ENCODE measurements at regions of chr2 and their contacts with region 1.

Region 1: GRCh38 chr2:201231781-201232466 is 28.4 kb upstream of the CASP8 start:
- DNase-seq: peak; percentile 96
- ATAC-seq: peak; percentile 55
- H3K4me3 Mint-ChIP-seq: peak overlapping the region; percentile 98
- H3K27ac Mint-ChIP-seq: peak overlapping the region; percentile 89
- H3K4me1 Mint-ChIP-seq: peaks cover 53% of the 10 kb centered on the region
- H3K27me3 Mint-ChIP-seq: no peaks in the 10 kb centered on the region

Region 2: GRCh38 chr2:200713003-200713703 is 518.8 kb before region 1 on chr2:
- CTCF ChIA-PET with region 1: interaction called, 16 read pairs
- POLR2A ChIA-PET with region 1: interaction called, 8 read pairs
- DNase-seq: peak; percentile 97
- ATAC-seq: peak; percentile 99
- H3K4me3 Mint-ChIP-seq: peak overlapping the region; percentile 71
- H3K27ac Mint-ChIP-seq: peak overlapping the region; percentile 98
- H3K4me1 Mint-ChIP-seq: peaks cover 18% of the 10 kb centered on the region
- H3K27me3 Mint-ChIP-seq: no peaks in the 10 kb centered on the region

Region 3: GRCh38 chr2:200963124-200963917 is 268.6 kb before region 1 on chr2 and contains the start of gene ORC2:
- CTCF ChIA-PET with region 1: interaction called, 21 read pairs
- POLR2A ChIA-PET with region 1: interaction called, 3 read pairs
- DNase-seq: peak; percentile 94
- ATAC-seq: peak; percentile 97
- H3K4me3 Mint-ChIP-seq: peak within 1 kb of the TSS; percentile 93
- H3K27ac Mint-ChIP-seq: peak within 1 kb of the TSS; percentile 97
- H3K4me1 Mint-ChIP-seq: peaks cover 63% of the 10 kb centered on the region
- H3K27me3 Mint-ChIP-seq: no peaks in the 10 kb centered on the region
- total RNA-seq, gene ORC2: 47.4 to 57.2 TPM

Region 4: GRCh38 chr2:201130524-201131186 is 101.3 kb before region 1 on chr2:
- CTCF ChIA-PET with region 1: interaction called, 11 read pairs
- POLR2A ChIA-PET with region 1: interaction called, 6 read pairs
- DNase-seq: peak; percentile 43
- ATAC-seq: peak; percentile 48
- H3K4me3 Mint-ChIP-seq: peak overlapping the region; percentile 62
- H3K27ac Mint-ChIP-seq: peak overlapping the region; percentile 85
- H3K4me1 Mint-ChIP-seq: peaks cover 72% of the 10 kb centered on the region
- H3K27me3 Mint-ChIP-seq: no peaks in the 10 kb centered on the region

Region 5: DNA sequence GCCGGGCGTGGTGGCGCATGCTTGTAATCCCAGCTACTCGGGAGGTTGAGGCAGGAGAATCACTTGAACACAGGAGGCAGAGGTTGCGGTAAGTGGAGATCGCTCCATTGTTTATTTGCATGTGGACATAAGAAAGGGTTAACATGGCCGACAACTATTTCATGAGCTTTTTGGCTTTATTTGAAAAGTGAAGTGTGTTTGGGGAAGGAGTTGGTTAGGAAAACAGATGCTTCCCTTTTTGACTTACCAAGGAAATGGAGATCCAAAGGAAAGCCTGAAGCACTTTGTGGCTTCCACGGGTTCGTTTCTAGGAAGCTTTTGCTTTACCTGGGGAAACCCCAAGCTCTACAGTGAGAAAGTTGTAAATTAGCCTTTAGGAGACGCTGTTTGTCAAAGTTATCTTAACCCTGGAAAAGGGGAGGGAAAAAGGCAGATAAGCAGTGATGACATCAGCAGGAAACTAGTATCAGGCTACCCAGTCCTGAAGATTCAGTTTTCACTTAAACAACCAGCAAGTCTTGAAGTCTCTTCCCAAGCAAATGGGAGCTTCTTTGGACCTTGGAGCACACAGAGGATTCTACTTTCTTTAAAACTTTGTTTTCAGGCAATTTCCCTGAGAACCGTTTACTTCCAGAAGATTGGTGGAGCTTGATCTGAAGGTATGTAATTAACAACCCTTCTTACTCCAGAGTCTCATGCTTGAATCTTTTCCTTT is 49.1 kb before region 1 on chr2 and contains the start of gene CASP10:
- CTCF ChIA-PET with region 1: interaction called, 455 read pairs
- POLR2A ChIA-PET with region 1: interaction called, 97 read pairs
- DNase-seq: peak; percentile 60
- ATAC-seq: peak; percentile 79
- H3K4me3 Mint-ChIP-seq: peak within 1 kb of the TSS; percentile 97
- H3K27ac Mint-ChIP-seq: peak within 1 kb of the TSS; percentile 93
- H3K4me1 Mint-ChIP-seq: peaks cover 46% of the 10 kb centered on the region
- H3K27me3 Mint-ChIP-seq: no peaks in the 10 kb centered on the region
- total RNA-seq, gene CASP10: 40.7 to 42.8 TPM

Region 6: DNA sequence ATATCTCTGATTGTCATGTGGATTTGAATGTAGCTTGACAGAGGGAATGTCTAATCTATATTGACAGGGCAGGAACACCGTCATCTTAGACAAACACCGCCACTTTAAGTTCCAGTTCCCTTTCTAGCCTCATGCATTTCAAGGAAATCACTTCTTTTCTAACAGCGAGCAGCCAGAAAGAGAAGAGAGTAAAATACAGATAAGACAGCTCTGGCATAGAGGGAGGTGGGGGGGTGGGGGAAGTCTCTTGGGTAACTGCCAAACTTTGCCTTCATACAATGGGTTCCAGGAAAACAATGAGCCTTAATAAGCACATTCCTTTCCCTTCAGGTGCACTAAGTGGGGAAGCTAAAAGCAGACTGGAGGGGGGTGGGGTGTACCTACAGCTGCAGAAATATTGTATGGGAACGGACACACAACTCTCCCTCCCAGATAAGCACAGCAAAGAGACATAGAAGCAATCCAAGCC is 11.8 kb before region 1 on chr2:
- CTCF ChIA-PET with region 1: interaction called, 72 read pairs
- POLR2A ChIA-PET with region 1: interaction called, 6 read pairs
- DNase-seq: no peak
- ATAC-seq: no peak
- H3K4me3 Mint-ChIP-seq: no peak overlapping the region
- H3K27ac Mint-ChIP-seq: peak overlapping the region; percentile 39
- H3K4me1 Mint-ChIP-seq: peaks cover 39% of the 10 kb centered on the region
- H3K27me3 Mint-ChIP-seq: no peaks in the 10 kb centered on the region

Region 7: DNA sequence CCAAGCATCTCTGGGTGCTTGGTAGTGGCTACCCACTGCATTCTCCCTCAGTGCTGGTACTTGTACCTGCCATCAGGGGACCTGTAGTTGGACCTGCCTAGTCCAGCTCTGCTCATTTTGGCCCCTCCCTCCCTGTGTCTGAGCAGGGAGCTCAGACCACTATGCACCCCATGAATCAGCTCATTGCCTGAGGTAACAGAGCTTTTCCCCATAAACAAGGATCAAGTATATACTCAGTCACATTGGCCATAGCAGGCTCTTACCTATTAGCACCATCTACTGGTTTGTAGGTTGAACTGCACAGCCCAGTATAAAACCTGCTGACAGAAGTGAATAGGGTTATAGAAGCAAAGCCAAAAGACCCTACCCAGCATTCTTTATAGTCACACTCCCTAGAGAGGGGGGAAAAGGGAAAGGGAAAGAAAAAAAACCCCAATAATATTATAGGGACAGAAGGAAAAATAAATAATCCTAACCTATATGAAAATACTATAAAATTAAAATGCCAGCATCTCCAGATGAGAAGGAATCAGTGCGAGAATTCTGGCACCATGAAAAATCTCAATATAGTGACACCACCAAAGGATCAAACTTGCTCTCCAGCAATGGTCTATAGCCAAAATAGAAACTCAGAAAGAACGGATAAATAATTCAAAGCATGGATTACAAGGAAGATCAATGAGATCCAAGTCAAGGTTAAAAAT is 132.1 kb after region 1 on chr2:
- CTCF ChIA-PET with region 1: interaction called, 62 read pairs
- POLR2A ChIA-PET with region 1: interaction called, 3 read pairs
- DNase-seq: peak; percentile 49
- ATAC-seq: peak; percentile 83
- H3K4me3 Mint-ChIP-seq: no peak overlapping the region
- H3K27ac Mint-ChIP-seq: peak overlapping the region; percentile 73
- H3K4me1 Mint-ChIP-seq: peaks cover 41% of the 10 kb centered on the region
- H3K27me3 Mint-ChIP-seq: no peaks in the 10 kb centered on the region

Measured in activated CD8-positive, alpha-beta T cell treated with anti-CD3 and anti-CD28 coated beads, Interleukin-2, amount 10 ng/mL, durations not matched to agents 7 days and 5 days (primary cell).